ENCODE measurements at regions of chr4 and their contacts with region 1.

Region 1: GRCh38 chr4:73019462-73020047 is 50.0 kb downstream of the COX18 start:
- DNase-seq: peak; percentile 76
- H3K4me3 ChIP-seq: no peak overlapping the region
- H3K27ac ChIP-seq: no peak overlapping the region
- H3K4me1 ChIP-seq: no peaks in the 10 kb centered on the region
- H3K27me3 ChIP-seq: peaks cover 8% of the 10 kb centered on the region; the same call in 1 of the 2 replicates

Region 2: DNA sequence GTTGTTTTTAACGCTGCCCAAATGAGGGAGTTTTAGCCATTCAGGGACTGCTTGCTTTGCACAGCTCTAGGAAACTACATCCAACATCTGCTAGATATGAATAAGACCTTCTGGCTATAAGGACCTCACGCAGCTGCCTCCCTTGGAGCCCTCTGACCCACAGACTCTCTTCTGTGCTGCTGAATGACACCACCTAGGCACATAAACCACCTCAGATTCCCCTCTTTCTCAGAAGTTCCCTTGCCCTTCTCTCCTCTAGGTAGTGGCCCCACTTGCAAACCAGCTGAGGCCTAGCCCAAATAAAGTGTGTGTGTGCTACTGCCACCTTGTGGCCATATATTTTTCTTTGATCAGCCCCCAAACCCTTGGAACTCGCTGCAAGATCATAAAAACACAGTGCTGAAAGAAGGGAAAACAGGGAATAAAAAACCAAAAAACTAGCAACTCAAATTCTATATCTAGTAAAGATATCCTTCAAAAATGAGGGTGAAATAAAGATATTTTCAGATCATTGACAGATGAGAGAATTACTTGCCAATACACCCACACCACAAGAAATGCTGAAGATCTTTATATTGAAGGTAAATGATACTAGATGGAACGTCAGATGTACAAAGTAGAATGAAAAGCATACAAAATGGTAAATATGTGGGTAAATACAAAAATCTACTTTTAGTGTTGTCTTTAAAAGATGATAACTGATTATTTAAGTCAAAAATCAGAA is 716.4 kb before region 1 on chr4:
- in situ Hi-C with region 1: loop called (anchors 25 kb)
- DNase-seq: peak; percentile 55
- H3K4me3 ChIP-seq: no peak overlapping the region
- H3K27ac ChIP-seq: no peak overlapping the region
- H3K4me1 ChIP-seq: no peaks in the 10 kb centered on the region
- H3K27me3 ChIP-seq: no peaks in the 10 kb centered on the region

Region 3: DNA sequence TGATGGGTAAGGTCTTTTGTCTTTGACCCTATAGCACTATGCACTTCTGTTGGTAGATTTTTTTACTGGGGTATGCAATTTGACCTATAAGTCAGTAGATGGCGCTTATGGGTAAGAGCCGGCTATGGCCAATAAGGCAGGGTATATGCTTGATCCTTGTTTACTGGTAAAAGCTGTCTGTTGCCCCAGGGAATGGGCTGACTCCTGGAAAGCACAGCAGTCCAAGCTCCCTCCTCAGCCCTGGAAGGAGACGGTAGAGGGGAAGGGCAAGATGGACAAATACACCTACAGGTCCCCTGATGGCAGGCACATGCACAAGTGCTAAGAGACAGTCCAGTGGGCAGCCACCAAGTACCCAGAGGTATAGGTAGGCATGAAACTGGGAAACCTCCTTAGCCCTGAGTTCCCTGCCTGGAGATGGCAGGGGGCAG is 514.2 kb before region 1 on chr4:
- in situ Hi-C with region 1: loop called (anchors 10 kb)
- DNase-seq: peak; percentile 70
- H3K4me3 ChIP-seq: no peak overlapping the region
- H3K27ac ChIP-seq: no peak overlapping the region
- H3K4me1 ChIP-seq: no peaks in the 10 kb centered on the region
- H3K27me3 ChIP-seq: peaks cover 4% of the 10 kb centered on the region; the same call in 1 of the 2 replicates

Region 4: DNA sequence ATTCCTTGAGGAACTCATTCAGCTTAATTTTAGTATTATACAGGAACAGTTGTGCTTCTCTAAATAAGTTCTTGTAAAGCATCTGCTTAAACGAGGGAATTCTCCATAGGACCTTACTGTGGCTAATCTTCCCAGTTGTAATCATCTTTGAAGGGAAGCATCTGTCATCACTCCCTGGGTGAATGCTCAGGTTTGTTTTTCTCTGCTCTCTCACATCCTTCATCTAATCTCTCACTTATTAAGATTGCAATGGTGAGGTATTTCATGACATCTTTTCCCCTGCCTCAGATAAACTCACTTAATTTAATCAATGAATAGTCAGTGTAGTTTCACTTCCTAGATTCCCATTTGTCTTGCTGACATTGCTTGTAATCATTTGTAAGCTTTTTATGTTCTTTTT is 328.8 kb before region 1 on chr4:
- in situ Hi-C with region 1: no loop called
- DNase-seq: no peak
- H3K4me3 ChIP-seq: no peak overlapping the region
- H3K27ac ChIP-seq: no peak overlapping the region
- H3K4me1 ChIP-seq: no peaks in the 10 kb centered on the region
- H3K27me3 ChIP-seq: no peaks in the 10 kb centered on the region

Region 5: DNA sequence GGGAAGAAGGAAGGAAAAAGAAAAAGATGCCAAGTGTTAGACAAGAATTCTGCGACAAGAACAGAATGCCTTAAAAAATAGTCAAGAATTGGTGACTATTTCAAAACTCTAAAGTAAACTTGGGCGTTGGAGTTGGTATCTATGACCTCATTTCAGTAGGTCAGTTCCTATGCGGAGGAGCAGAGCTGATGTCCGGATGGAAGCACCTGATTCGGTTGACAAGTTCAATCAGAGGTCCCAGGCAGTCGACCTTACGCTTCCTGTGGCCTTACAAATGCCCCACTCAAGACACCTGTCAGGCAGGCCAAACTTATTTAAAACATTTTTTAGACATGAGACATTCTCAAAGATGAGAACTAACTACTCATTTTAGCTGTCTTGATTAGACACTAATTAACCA is 312.9 kb before region 1 on chr4:
- in situ Hi-C with region 1: loop called (anchors 5 kb)
- DNase-seq: no peak
- H3K4me3 ChIP-seq: no peak overlapping the region
- H3K27ac ChIP-seq: no peak overlapping the region
- H3K4me1 ChIP-seq: no peaks in the 10 kb centered on the region
- H3K27me3 ChIP-seq: no peaks in the 10 kb centered on the region

Region 6: GRCh38 chr4:73527196-73527595 is 507.6 kb after region 1 on chr4:
- in situ Hi-C with region 1: no loop called
- DNase-seq: no peak
- H3K4me3 ChIP-seq: no peak overlapping the region
- H3K27ac ChIP-seq: no peak overlapping the region
- H3K4me1 ChIP-seq: no peaks in the 10 kb centered on the region
- H3K27me3 ChIP-seq: no peaks in the 10 kb centered on the region

Region 7: GRCh38 chr4:73718375-73719373 is 699.1 kb after region 1 on chr4:
- in situ Hi-C with region 1: no loop called
- DNase-seq: peak; percentile 72
- H3K4me3 ChIP-seq: no peak overlapping the region
- H3K27ac ChIP-seq: peak overlapping the region; percentile 79
- H3K4me1 ChIP-seq: peaks cover 46% of the 10 kb centered on the region
- H3K27me3 ChIP-seq: no peaks in the 10 kb centered on the region

Region 8: GRCh38 chr4:74016068-74016467 is 996.5 kb after region 1 on chr4:
- in situ Hi-C with region 1: no loop called
- DNase-seq: no peak
- H3K4me3 ChIP-seq: no peak overlapping the region
- H3K27ac ChIP-seq: no peak overlapping the region
- H3K4me1 ChIP-seq: no peaks in the 10 kb centered on the region
- H3K27me3 ChIP-seq: no peaks in the 10 kb centered on the region

Measured in GM23248 (cell line).